RWPE1 (cell line): ENCODE measurements at regions of chr10 and their contacts with region 1.

Region 1: GRCh38 chr10:102167861-102168260 is 15.7 kb downstream of the NOLC1 start:
- DNase-seq: no peak
- H3K27ac ChIP-seq: no peak overlapping the region
- CTCF ChIP-seq: no peak

Region 2: DNA sequence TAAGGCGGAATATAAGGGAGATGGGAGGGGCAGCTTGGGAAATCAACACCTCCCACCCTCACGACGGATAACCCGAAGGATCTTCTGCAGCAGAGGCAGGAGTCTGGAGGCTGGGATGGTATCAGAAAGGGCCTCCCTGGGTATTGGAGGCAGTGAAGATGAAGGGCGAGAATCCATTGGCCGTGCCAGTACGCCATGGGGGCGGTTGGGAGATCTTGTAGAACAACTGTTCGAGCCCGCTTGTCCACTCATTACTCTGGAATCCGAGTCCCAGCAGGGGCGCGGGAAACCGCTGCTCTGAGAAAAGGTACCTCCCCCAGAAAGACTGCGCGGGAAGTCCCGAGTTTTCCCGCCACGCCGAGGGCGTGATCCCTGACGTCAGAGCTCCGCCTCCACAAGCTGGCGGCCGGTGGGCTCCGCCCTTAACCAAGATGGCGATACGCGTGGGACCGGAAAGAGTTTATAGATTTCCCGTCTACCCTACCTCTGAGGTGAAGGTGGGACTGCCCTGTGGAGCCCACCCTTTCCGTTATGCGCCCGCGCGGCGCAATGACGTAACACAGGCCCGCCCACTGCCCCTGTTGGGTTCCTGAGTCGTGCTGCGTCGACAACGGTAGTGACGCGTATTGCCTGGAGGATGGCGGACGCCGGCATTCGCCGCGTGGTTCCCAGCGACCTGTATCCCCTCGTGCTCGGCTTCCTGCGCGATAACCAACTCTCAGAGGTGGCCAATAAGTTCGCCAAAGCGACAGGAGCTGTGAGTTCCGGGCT is 15.9 kb before region 1 on chr10 and contains the start of gene NOLC1:
- CTCF ChIA-PET with region 1: interaction called, 10 read pairs
- POLR2A ChIA-PET with region 1: no interaction called
- DNase-seq: peak; percentile 97
- H3K27ac ChIP-seq: peak within 1 kb of the TSS; percentile 96
- CTCF ChIP-seq: no peak